GM10248 (cell line): ENCODE measurements at regions of chr21 and their contacts with region 1.

Region 1: GRCh38 chr21:29477941-29478340 is 179.2 kb downstream of the BACH1 start:
- DNase-seq: no peak
- CTCF ChIP-seq: no peak

Region 2: GRCh38 chr21:29490016-29490415 is 12.1 kb after region 1 on chr21:
- CTCF ChIA-PET with region 1: interaction called, 11 read pairs
- POLR2A ChIA-PET with region 1: no interaction called
- DNase-seq: no peak
- CTCF ChIP-seq: no peak

Region 3: GRCh38 chr21:29504751-29505321 is 26.9 kb after region 1 on chr21:
- CTCF ChIA-PET with region 1: interaction called, 14 read pairs
- POLR2A ChIA-PET with region 1: no interaction called
- DNase-seq: no peak
- CTCF ChIP-seq: no peak

Region 4: GRCh38 chr21:29849735-29850176 is 371.8 kb after region 1 on chr21:
- CTCF ChIA-PET with region 1: interaction called, 39 read pairs
- POLR2A ChIA-PET with region 1: no interaction called
- DNase-seq: peak; percentile 55
- CTCF ChIP-seq: peak; percentile 82